PC-9 (cell line): ENCODE measurements at regions of chr4 and their contacts with region 1.

Region 1: GRCh38 chr4:94653984-94654609 is 103.7 kb upstream of the BMPR1B start:
- DNase-seq: no peak
- H3K4me3 ChIP-seq: no peak overlapping the region
- H3K27ac ChIP-seq: no peak overlapping the region
- H3K4me1 ChIP-seq: no peaks in the 10 kb centered on the region
- H3K27me3 ChIP-seq: no peaks in the 10 kb centered on the region
- CTCF ChIP-seq: no peak

Region 2: DNA sequence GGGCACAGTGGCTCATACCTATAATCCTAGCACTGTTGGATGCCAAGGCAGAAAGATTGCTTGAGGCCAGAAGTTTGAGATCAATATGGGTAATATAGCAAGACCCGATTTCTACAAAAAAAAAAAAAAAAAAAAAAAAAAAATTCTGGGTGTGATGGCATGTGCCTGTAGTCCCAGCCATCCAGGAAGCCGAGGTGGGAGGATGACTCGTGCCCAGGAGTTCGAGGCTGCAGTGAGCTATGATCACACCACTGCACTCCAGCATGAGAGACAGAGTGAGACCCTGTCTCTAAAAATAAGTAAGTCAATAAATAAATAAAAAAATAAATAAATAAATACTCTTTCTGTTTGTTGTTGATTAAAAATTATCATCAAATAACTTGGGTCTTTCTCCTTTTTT is 41.3 kb after region 1 on chr4:
- CTCF ChIA-PET with region 1: no interaction called
- POLR2A ChIA-PET with region 1: interaction called, 18 read pairs
- intact Hi-C with region 1: no loop called
- DNase-seq: no peak
- H3K4me3 ChIP-seq: no peak overlapping the region
- H3K27ac ChIP-seq: no peak overlapping the region
- H3K4me1 ChIP-seq: peaks cover 11% of the 10 kb centered on the region
- H3K27me3 ChIP-seq: no peaks in the 10 kb centered on the region
- CTCF ChIP-seq: no peak